Activated naive CD4-positive, alpha-beta T cell treated with anti-CD3 and anti-CD28 coated beads for 36 hours (primary cell): ENCODE measurements at regions of chr1 and their contacts with region 1.

Region 1: DNA sequence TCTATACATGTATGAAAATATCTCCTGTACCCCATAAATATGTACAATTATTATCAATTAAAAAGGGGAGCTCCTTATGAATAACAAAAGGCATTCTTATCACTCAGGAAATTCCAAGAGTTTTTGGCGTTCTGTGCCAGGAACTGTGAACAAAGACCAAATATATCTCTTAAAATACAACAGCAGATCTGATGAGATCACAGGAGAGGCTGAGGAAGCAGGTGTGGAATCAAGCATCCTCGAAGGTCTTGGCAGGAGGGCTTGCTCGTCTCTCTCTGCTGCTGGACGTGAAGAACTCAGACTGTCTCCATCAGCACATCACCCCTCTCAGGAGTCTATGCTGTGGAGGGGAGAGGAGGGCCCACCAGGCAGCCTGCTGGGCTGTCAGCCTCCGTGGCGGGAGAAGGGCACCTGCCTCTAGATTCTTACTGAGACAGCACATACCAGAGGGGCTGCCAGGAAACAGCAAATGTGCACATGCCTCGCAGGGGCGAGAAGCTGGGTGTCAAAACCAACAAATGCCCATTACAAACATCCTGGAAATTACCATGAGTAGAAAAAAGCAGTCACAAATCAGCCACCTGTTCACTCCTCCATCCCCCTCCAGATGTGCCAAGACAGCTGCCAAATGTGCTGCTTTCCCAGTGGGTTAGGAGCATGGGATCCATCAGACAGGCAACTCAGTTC is 30.8 kb upstream of the FAM89A start:
- DNase-seq: no peak
- H3K4me3 Mint-ChIP-seq: no peak overlapping the region
- H3K27ac Mint-ChIP-seq: no peak overlapping the region
- H3K4me1 Mint-ChIP-seq: no peaks in the 10 kb centered on the region
- H3K27me3 Mint-ChIP-seq: no peaks in the 10 kb centered on the region

Region 2: DNA sequence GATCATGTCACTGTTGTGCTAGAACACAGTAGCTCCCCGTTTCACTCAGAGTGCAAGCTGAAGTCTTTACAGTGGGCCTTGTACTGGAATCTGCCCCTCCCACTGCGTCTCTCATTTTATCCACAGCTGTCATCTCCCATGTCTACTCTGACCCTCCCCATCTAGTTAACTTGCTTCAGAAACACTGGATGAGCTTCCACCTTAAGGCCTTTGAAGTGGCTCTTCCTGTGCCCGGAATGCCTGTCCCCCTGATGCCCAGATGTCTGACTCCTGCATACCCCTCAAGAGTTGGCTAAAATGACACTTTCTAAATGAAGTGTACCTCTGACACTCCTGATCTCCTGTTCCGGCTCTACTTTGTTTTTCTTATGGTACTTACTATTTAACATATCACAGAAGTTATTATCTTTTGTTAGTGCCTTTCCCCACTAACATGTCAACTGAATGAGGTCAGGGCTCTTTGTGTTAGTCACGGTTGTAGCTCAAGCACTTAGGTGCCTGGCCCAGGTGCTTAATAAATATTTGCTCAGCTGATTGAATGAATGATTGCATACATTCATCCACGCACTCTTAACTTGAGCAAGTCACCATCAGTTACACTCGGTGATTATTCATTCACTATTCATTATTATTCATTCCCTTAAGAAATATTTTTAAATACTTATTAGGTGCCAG is 78.7 kb before region 1 on chr1:
- CTCF ChIA-PET with region 1: no interaction called
- intact Hi-C with region 1: loop called (anchors 10 kb)
- DNase-seq: no peak
- H3K4me3 Mint-ChIP-seq: no peak overlapping the region
- H3K27ac Mint-ChIP-seq: no peak overlapping the region
- H3K4me1 Mint-ChIP-seq: peaks cover 1% of the 10 kb centered on the region
- H3K27me3 Mint-ChIP-seq: no peaks in the 10 kb centered on the region

Region 3: GRCh38 chr1:231170875-231171274 is 100.0 kb after region 1 on chr1:
- CTCF ChIA-PET with region 1: no interaction called
- intact Hi-C with region 1: no loop called
- DNase-seq: no peak
- H3K4me3 Mint-ChIP-seq: no peak overlapping the region
- H3K27ac Mint-ChIP-seq: no peak overlapping the region
- H3K4me1 Mint-ChIP-seq: no peaks in the 10 kb centered on the region
- H3K27me3 Mint-ChIP-seq: peaks cover 29% of the 10 kb centered on the region